Posterior vena cava (tissue), 2 donors: ENCODE measurements at regions of chr5 and their contacts with region 1.

Region 1: DNA sequence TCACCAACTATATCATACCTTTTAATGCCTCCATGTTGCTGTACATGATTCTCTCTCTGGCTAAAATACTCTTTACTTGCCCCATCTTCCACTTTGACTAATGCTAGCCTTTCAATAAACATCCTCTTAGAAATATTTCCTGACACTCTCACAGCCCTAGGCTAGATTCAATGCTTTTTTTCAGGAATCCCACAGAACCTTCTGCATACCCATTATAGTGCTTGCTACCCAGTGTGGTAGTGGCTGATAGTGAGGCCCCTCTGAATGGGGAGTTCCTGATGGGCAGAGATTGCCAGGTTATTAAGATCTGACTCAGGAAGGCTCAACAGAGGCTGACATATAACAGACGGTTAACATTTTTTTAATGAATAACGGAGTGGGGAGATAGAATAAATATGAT is 11.6 kb downstream of the SSBP2 start:
- DNase-seq: no peak

Region 2: GRCh38 chr5:81665795-81666194 is 73.5 kb before region 1 on chr5:
- intact Hi-C with region 1: loop called in 1 of 2 experiments (anchors 10 kb)
- DNase-seq: no peak

Region 3: GRCh38 chr5:82111191-82111590 is 371.9 kb after region 1 on chr5:
- intact Hi-C with region 1: no loop called
- DNase-seq: no peak